WTC11 (cell line): ENCODE measurements at regions of chr2 and their contacts with region 1.

Region 1: DNA sequence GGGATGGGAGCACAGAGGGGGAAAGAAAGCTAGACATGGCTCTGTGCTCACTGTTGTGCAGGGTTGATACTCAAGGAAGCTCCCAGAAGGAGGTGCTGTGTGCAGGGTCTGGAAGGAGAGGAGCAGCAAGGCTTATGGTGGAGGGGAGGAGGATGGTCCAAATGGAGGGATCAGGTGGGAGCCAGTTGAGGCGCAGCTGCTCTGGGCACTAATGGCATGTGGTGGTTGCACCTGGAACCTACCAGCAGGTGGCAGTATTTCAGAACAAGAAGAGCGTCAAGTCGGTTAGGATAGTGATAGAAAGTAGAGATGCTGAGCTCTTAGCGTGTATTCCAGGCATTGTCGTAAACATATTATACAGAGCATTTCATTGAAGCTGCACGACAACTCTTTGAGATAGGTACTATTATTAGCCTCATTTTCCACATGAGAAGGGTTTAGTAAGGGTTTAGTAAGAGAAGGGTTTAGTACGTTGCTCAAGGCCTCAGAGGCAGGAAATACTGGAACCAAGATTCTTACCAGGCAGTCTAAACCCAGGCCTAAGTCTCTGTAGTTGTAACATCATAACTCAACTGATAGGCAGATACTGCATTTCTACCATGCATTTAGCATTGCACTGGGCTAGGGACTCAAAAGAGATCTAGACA is 223.7 kb downstream of the CYP26B1 start:
- DNase-seq: peak; percentile 86
- ATAC-seq: peak; percentile 99
- H3K4me3 Mint-ChIP-seq: no peak overlapping the region
- H3K27ac Mint-ChIP-seq: no peak overlapping the region
- H3K4me1 Mint-ChIP-seq: no peaks in the 10 kb centered on the region
- H3K27me3 Mint-ChIP-seq: no peaks in the 10 kb centered on the region
- CTCF ChIP-seq: peak; percentile 89

Region 2: GRCh38 chr2:71939588-71940535 is 15.9 kb after region 1 on chr2:
- CTCF ChIA-PET with region 1: interaction called, 15 read pairs
- POLR2A ChIA-PET with region 1: no interaction called
- DNase-seq: peak; percentile 4
- ATAC-seq: no peak
- H3K4me3 Mint-ChIP-seq: no peak overlapping the region
- H3K27ac Mint-ChIP-seq: no peak overlapping the region
- H3K4me1 Mint-ChIP-seq: no peaks in the 10 kb centered on the region
- H3K27me3 Mint-ChIP-seq: no peaks in the 10 kb centered on the region
- CTCF ChIP-seq: no peak

Region 3: GRCh38 chr2:71995067-71995665 is 71.2 kb after region 1 on chr2:
- CTCF ChIA-PET with region 1: interaction called, 21 read pairs
- POLR2A ChIA-PET with region 1: no interaction called
- DNase-seq: no peak
- ATAC-seq: peak; percentile 60
- H3K4me3 Mint-ChIP-seq: no peak overlapping the region
- H3K27ac Mint-ChIP-seq: no peak overlapping the region
- H3K4me1 Mint-ChIP-seq: peaks cover 19% of the 10 kb centered on the region
- H3K27me3 Mint-ChIP-seq: no peaks in the 10 kb centered on the region; the same call in 1 of the 2 replicates
- CTCF ChIP-seq: no peak

Region 4: DNA sequence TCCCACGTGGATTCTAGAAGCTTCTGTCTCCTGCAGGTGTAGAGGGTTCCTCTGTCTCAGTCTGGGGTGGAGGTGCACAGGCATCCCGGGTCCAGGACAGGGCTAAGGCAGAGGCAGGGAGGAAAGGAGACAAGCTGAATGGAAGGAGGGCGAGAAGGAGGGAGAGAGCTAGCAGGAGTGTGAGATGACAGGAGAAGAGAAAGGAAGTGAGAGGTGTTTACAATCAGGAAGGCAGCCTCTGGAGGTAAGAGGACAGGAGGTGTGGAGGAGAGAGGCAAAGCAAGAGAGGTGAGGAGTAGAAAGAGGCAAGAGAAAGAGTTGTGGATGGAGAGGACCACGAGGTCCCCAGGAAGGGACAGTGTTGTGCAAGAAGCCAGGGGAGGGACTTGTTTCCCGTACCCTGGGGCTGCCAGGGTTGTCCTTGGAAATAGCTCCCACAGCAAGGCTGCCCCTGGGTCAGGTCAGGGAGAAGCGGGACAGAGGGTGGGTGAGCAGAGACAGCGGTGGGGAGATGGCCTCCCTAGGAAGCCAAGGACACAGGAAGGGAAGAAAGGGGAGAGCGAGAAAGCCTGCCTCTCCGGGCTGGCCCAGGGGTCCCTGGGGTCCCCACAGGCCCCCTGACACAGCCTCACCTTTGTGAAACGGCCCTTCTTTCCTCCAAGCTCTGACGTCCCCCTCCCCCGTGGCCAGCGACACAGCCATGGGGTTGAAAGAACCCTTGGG is 86.8 kb after region 1 on chr2:
- CTCF ChIA-PET with region 1: interaction called, 12 read pairs
- POLR2A ChIA-PET with region 1: no interaction called
- DNase-seq: no peak
- ATAC-seq: no peak
- H3K4me3 Mint-ChIP-seq: no peak overlapping the region
- H3K27ac Mint-ChIP-seq: no peak overlapping the region
- H3K4me1 Mint-ChIP-seq: peaks cover 14% of the 10 kb centered on the region
- H3K27me3 Mint-ChIP-seq: no peaks in the 10 kb centered on the region
- CTCF ChIP-seq: no peak

Region 5: DNA sequence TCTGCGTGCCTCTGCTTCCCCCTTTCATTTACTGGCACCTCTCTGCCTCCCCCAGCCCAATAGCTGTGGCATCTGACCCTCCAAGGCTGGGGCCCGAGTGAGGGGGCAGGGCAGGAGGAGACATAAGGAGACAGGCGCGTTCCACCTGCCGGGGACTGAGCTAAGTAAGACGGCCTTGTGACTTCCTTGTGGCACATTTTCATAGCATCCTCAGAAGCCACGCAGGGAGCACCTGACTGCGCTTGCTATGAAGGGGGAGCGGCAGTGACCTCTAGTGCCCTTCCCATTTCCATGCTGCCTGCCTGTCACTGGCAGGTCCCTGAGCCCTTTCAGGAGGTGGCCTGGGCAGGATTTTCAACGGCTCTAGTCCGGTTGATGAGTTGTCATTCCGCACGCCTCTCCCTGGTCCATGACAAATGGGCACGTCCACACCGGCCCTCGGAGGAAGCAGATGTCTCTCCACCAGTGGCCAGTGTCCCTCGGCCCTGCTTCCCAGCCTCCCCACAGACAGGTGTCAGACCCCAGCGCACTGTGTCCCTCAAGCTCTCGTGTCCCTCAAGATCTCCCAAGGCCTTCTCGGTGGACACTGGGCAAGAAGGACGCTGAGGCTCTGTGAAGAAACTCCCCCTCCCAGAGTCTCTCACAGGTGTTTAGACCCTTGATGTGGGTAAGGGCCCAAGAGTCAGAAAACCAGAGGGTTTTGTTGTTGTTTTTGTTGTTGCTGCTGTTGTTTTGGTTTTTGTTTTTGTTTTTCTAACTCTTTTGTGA is 181.0 kb after region 1 on chr2:
- CTCF ChIA-PET with region 1: interaction called, 15 read pairs
- POLR2A ChIA-PET with region 1: interaction called, 7 read pairs
- DNase-seq: peak; percentile 53
- ATAC-seq: peak; percentile 88
- H3K4me3 Mint-ChIP-seq: no peak overlapping the region
- H3K27ac Mint-ChIP-seq: no peak overlapping the region
- H3K4me1 Mint-ChIP-seq: 0 out of 2 replicates have a peak, but pooled peaks cover 2% of the 10 kb centered on the region
- H3K27me3 Mint-ChIP-seq: peaks cover 3% of the 10 kb centered on the region; the same call in 1 of the 2 replicates
- CTCF ChIP-seq: no peak

Region 6: DNA sequence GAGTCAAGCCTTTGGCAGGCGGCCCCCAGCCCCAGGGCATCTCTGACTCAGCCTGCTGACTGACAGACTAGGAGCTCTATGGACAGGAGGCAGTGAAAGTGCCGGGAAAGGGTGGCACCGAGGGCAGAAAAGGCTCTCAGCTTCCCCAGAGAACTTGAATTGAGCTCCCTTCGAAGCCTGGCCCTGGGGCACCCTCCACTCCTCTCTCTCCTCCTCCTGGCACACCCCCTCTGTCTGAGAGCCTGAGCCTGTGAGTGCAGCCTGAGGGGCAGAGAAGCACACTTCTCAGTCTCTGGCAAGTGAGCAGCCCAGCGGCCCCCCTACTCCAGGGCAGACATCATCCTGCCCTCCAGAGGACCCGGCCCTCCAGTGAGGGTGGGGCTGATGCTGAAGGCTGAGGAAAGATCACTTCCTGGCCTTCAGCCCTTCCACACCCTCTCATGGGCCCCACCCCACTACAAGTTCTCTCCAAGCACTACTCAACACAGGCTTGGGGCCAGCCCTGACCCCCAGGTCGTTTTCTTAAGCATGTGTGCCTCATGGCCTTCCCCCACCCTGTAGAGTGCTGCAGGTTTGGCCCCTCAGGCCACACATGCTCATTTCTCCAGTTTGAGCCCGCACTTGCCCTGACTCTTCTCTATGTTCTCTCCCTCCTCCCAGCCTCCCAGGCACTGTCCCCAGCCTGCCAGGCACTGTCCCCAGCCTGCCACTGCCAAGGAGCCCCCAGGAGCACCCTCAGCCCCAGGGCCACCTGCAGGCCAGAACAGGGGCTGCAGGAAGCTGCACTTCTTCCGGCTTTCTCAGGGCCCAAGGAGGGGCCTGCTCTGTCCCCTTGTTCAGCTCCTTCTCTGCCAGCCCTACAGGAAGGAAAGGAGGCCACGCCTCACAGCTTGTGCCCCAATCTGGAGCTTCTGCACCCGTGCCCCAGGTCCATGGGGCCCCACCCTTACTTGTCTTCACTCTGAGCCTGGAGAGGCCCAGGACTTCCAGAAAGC is 191.8 kb after region 1 on chr2:
- CTCF ChIA-PET with region 1: interaction called, 24 read pairs
- POLR2A ChIA-PET with region 1: no interaction called
- DNase-seq: peak; percentile 64
- ATAC-seq: peak; percentile 97
- H3K4me3 Mint-ChIP-seq: no peak overlapping the region
- H3K27ac Mint-ChIP-seq: no peak overlapping the region
- H3K4me1 Mint-ChIP-seq: peaks cover 3% of the 10 kb centered on the region; the same call in 1 of the 2 replicates
- H3K27me3 Mint-ChIP-seq: peaks cover 6% of the 10 kb centered on the region
- CTCF ChIP-seq: peak; percentile 57; the same call in 1 of the 2 replicates

Region 7: DNA sequence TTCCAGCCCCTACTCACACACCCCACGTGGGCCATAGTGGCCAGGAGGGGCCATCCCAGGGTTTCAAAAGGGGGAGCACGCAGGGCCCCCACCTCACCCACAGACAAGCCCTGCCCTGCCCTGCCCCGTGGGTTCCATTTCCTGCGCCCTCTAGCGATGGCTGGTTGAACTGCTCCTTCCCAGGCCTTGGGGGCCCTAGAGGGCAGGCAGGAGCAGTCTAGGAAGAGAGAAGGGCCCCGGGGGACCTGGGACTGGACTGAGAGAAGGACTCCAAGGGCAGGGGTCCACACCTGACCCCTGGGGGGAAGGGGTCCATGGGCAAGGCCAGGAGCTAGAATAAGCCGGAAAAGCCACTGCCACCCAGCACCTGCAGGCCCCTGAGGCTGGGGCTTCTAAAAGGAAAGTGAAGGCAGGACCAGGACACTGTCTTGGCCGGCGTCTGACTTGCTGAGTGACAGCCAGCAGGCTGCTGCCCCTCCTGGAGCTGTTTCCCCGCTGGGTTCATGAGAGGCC is 213.5 kb after region 1 on chr2:
- CTCF ChIA-PET with region 1: interaction called, 11 read pairs
- POLR2A ChIA-PET with region 1: no interaction called
- DNase-seq: peak; percentile 91
- ATAC-seq: peak; percentile 89
- H3K4me3 Mint-ChIP-seq: no peak overlapping the region
- H3K27ac Mint-ChIP-seq: no peak overlapping the region
- H3K4me1 Mint-ChIP-seq: peaks cover 8% of the 10 kb centered on the region
- H3K27me3 Mint-ChIP-seq: peaks cover 39% of the 10 kb centered on the region
- CTCF ChIP-seq: peak; percentile 97